T-cell (primary cell): ENCODE measurements at regions of chr5 and their contacts with region 1.

Region 1: GRCh38 chr5:114243281-114243988 is 118.4 kb upstream of the KCNN2 start:
- DNase-seq: no peak
- ATAC-seq: no peak
- H3K4me3 ChIP-seq: no peak overlapping the region
- H3K4me3 Mint-ChIP-seq: no peak overlapping the region
- H3K27ac ChIP-seq: no peak overlapping the region
- H3K27ac Mint-ChIP-seq: no peak overlapping the region
- H3K4me1 ChIP-seq: no peaks in the 10 kb centered on the region
- H3K4me1 Mint-ChIP-seq: no peaks in the 10 kb centered on the region
- H3K27me3 ChIP-seq: no peaks in the 10 kb centered on the region
- H3K27me3 Mint-ChIP-seq: no peaks in the 10 kb centered on the region

Region 2: DNA sequence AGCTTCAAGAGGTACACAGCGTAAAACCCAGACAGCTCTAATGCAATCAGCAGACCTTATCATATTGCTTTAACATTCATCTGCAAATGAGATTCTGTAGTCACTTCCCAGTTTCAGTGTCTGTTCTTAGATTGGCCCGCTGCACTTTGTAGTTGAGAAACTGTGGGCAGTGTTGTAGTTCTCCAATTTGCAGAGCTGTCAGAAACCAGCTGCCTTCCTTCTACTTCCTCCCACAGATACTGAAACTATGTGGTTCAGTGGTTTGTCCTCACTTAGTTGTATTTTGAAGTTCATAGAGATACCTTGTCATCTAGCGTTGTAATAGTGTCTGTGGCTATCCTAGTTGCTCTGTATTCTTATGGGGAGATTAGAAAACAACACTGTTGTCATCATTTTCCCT is 965.8 kb after region 1 on chr5:
- CTCF ChIA-PET with region 1: no interaction called
- POLR2A ChIA-PET with region 1: interaction called in 1 of 2 experiments, 14 read pairs
- DNase-seq: peak in 26 of 35 experiments; percentile 2 to 57 (median 20)
- ATAC-seq: peak; percentile 57 to 96 (median 80)
- H3K4me3 ChIP-seq: no peak overlapping the region
- H3K4me3 Mint-ChIP-seq: no peak overlapping the region
- H3K27ac ChIP-seq: no peak overlapping the region
- H3K27ac Mint-ChIP-seq: no peak overlapping the region
- H3K4me1 ChIP-seq: peaks cover 2% of the 10 kb centered on the region in 2 experiments
- H3K4me1 Mint-ChIP-seq: peaks cover 10 to 20% (median 11%) of the 10 kb centered on the region in 3 donors
- H3K27me3 ChIP-seq: no peaks in the 10 kb centered on the region
- H3K27me3 Mint-ChIP-seq: no peaks in the 10 kb centered on the region